Mammary epithelial cell (primary cell): ENCODE measurements at regions of chr7 and their contacts with region 1.

Region 1: DNA sequence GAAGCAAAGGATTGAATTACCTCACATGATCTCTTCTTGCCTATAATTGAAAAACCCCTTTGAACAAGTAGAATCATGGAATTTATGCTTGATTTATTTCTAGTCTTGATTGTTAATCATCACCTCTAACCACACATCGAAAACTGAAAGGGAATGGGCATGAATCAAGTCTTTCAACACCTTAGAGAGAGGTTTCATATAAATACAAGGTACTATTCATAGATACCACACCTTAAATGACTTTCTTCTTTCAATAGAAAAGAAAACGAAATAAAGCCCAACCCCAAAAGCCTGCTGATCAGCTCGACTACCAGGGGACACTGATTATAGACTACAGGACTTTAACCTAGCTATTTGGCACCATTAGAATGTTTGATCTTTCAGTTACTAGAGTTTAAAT is 128.6 kb upstream of the PTPRZ1 start:
- DNase-seq: peak; percentile 91
- H3K4me3 ChIP-seq: no peak overlapping the region
- H3K27ac ChIP-seq: peak overlapping the region; percentile 94
- H3K4me1 ChIP-seq: peaks cover 44% of the 10 kb centered on the region
- H3K27me3 ChIP-seq: no peaks in the 10 kb centered on the region
- CTCF ChIP-seq: no peak

Region 2: GRCh38 chr7:121605317-121605680 is 139.0 kb before region 1 on chr7:
- CTCF ChIA-PET with region 1: no interaction called
- dilution Hi-C with region 1: no loop called
- in situ Hi-C with region 1: no loop called
- intact Hi-C with region 1: loop called (anchors 5 kb)
- DNase-seq: peak; percentile 46
- H3K4me3 ChIP-seq: no peak overlapping the region
- H3K27ac ChIP-seq: no peak overlapping the region
- H3K4me1 ChIP-seq: peaks cover 12% of the 10 kb centered on the region
- H3K27me3 ChIP-seq: no peaks in the 10 kb centered on the region
- CTCF ChIP-seq: peak; percentile 32 to 68

Region 3: GRCh38 chr7:121797657-121798452 is 53.5 kb after region 1 on chr7:
- CTCF ChIA-PET with region 1: interaction called, 3 read pairs
- dilution Hi-C with region 1: no loop called
- in situ Hi-C with region 1: no loop called
- intact Hi-C with region 1: loop called (anchors 5 kb)
- DNase-seq: peak; percentile 86
- H3K4me3 ChIP-seq: peak overlapping the region in 1 of 3 experiments; percentile 6
- H3K27ac ChIP-seq: peak overlapping the region; percentile 96
- H3K4me1 ChIP-seq: peaks cover 64% of the 10 kb centered on the region
- H3K27me3 ChIP-seq: no peaks in the 10 kb centered on the region
- CTCF ChIP-seq: no peak